ENCODE measurements at regions of chr15 and their contacts with region 1.

Region 1: GRCh38 chr15:58749532-58750337 is at the start of gene ADAM10:
- DNase-seq: peak; percentile 92 to 99 (median 98)
- ATAC-seq: peak; percentile 89
- H3K4me3 ChIP-seq: peak within 1 kb of the TSS; percentile 97
- H3K4me3 Mint-ChIP-seq: peak within 1 kb of the TSS; percentile 97
- H3K27ac ChIP-seq: peak within 1 kb of the TSS; percentile 73 to 81
- H3K27ac Mint-ChIP-seq: peak within 1 kb of the TSS; percentile 90
- H3K4me1 ChIP-seq: peaks cover 19% of the 10 kb centered on the region
- H3K4me1 Mint-ChIP-seq: peaks cover 46% of the 10 kb centered on the region
- H3K27me3 ChIP-seq: no peaks in the 10 kb centered on the region
- H3K27me3 Mint-ChIP-seq: no peaks in the 10 kb centered on the region
- CTCF ChIP-seq: no peak
- total RNA-seq, gene ADAM10: 70.5 to 80.4 TPM

Region 2: GRCh38 chr15:58830556-58830955 is 80.8 kb after region 1 on chr15:
- CTCF ChIA-PET with region 1: no interaction called
- POLR2A ChIA-PET with region 1: no interaction called
- intact Hi-C with region 1: no loop called
- DNase-seq: no peak
- ATAC-seq: no peak
- H3K4me3 ChIP-seq: no peak overlapping the region
- H3K4me3 Mint-ChIP-seq: no peak overlapping the region
- H3K27ac ChIP-seq: no peak overlapping the region
- H3K27ac Mint-ChIP-seq: no peak overlapping the region
- H3K4me1 ChIP-seq: no peaks in the 10 kb centered on the region
- H3K4me1 Mint-ChIP-seq: no peaks in the 10 kb centered on the region
- H3K27me3 ChIP-seq: no peaks in the 10 kb centered on the region
- H3K27me3 Mint-ChIP-seq: no peaks in the 10 kb centered on the region
- CTCF ChIP-seq: no peak

Region 3: DNA sequence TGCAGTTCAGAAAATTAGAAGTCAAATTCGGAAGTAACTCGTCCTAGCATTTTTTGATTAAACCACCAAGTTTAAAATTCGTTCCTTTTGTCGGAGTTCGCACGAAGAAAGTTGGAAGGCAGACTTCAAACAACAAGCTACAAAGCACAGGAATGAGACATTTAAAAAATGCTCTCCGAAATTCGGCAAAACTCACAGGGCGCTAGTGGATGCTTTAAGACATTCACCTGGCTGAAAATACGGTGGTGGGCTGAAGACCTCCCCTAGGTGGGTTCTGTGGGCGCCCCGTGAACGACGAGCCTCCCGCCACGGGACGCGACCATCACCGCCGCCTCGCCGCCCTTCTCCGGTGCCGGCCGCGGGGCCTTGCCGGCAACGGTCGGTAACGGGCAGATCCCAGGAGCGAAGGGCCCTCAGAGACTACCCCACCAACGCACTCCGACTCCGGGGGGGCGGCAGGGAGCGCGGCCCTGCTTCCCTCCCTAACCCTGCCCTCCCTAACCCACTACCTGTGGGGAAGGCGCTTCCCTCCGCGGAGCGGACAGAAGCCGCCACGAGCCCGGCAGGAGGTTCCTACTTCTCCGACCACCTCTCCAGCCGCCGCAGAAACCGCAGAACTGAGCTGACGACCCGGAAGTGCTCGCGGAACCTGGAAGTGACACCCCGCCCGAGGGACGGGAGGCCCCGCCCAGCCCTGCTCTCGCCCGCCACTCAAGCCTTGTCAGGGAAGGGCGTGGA is 907.3 kb after region 1 on chr15 and contains the start of gene GTF2A2:
- CTCF ChIA-PET with region 1: no interaction called
- POLR2A ChIA-PET with region 1: no interaction called
- intact Hi-C with region 1: loop called in 1 of 2 experiments (anchors 5 kb)
- DNase-seq: peak; percentile 82 to 96 (median 89)
- ATAC-seq: peak; percentile 98
- H3K4me3 ChIP-seq: peak within 1 kb of the TSS; percentile 94
- H3K4me3 Mint-ChIP-seq: peak within 1 kb of the TSS; percentile 57
- H3K27ac ChIP-seq: peak within 1 kb of the TSS; percentile 77 to 86
- H3K27ac Mint-ChIP-seq: no peak within 1 kb of the TSS
- H3K4me1 ChIP-seq: peaks cover 17% of the 10 kb centered on the region
- H3K4me1 Mint-ChIP-seq: no peaks in the 10 kb centered on the region
- H3K27me3 ChIP-seq: no peaks in the 10 kb centered on the region
- H3K27me3 Mint-ChIP-seq: no peaks in the 10 kb centered on the region
- CTCF ChIP-seq: no peak
- total RNA-seq, gene GTF2A2: 40.3 to 44.6 TPM